Activated CD4-positive, alpha-beta T cell treated with anti-CD3 and anti-CD28 coated beads for 36 hours (primary cell): ENCODE measurements at regions of chr1 and their contacts with region 1.

Region 1: DNA sequence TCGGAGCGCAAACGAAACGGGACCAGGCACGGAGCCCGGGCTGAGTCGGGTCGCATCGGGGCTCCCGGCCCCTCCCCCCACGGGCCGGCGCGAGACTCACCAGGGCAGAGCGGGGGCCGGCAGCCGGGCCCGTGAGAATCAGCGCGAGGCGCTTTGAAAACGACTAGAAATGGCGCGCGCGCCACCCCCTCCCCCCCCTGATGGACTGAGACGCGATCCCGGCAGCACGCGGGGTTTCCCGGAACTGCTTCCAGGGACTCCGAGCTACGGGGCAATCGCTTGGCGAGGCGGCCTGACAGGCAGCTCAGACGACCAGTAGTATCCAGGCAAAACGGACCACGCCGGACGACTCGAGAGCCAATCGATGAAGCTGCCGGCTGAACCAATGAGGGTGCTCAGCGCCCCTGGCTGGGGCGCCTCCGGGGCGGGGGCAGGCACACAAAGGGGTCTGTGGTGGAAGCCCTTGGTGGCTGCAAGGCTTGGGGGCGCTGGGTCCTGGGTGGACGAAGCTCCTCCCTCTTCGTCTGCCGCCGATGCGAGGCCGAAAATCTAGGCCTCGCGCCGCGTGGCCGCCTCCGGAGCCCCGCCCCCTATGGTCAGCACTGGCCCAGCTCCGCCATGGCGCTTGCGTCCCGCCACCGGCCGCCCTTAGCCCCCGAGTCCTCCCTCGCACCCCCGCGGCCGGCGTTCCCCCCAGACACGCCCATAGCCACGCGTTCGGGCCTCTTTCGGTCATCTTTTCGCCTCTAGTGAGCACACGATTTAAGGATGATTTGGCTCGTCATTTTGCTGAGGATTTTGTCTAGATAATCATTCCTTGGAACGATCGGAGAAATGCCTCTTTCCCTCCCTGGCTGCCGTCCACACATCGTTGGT is at the start of gene HNRNPR:
- DNase-seq: peak; percentile 100
- ATAC-seq: peak; percentile 97
- H3K4me3 Mint-ChIP-seq: peak within 1 kb of the TSS; percentile 85
- H3K27ac Mint-ChIP-seq: peak within 1 kb of the TSS; percentile 96
- H3K4me1 Mint-ChIP-seq: peaks cover 35% of the 10 kb centered on the region
- H3K27me3 Mint-ChIP-seq: no peaks in the 10 kb centered on the region
- total RNA-seq, gene HNRNPR: 190 to 210 TPM

Region 2: DNA sequence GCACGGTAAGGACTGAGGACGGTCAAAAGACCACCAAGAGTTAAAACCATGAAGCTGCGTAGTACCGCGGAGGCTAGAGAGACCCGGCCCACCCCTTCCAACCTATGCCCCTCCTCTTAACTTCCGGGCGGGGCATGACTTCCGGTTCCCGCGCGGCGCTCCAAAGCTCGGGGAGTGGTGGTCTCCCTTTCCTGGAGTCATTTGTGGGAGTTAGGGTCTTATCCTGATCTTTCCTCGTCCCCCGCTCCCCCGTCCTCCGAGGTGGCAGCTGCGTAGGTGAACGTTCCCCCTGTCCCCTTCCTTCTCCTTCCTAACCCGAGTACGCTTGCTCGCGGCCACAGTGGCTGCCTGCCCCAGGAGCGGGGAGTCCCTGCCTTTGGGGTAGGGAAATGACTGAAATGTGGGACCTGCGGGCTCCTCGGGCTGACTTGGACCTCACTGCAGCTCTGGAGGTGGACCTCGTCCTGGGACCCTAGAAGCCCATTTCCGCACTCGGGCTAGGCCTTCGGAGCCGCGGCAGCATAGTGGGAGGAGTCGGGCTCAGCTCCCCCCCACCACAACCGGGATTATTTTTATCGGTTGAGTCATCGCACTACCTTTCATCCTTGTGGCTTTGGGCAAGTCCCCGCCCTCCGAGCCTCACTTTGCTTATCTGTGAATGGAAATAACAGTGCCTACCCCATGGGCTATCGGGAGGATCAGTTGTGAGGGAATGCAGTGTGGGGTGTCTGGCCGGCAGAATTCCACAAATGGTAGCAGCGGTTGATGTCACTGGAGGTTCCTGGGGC is 1318.8 kb before region 1 on chr1:
- CTCF ChIA-PET with region 1: no interaction called
- POLR2A ChIA-PET with region 1: no interaction called
- intact Hi-C with region 1: loop called in 1 of 2 experiments (anchors 1 kb)
- DNase-seq: peak; percentile 94
- ATAC-seq: peak; percentile 74
- H3K4me3 Mint-ChIP-seq: peak overlapping the region; percentile 82
- H3K27ac Mint-ChIP-seq: peak overlapping the region; percentile 99
- H3K4me1 Mint-ChIP-seq: peaks cover 59% of the 10 kb centered on the region
- H3K27me3 Mint-ChIP-seq: no peaks in the 10 kb centered on the region

Region 3: GRCh38 chr1:23019094-23019862 is 325.1 kb before region 1 on chr1 and contains the start of gene KDM1A:
- CTCF ChIA-PET with region 1: no interaction called
- POLR2A ChIA-PET with region 1: no interaction called
- intact Hi-C with region 1: loop called in 1 of 2 experiments (anchors 1 kb)
- DNase-seq: peak; percentile 96
- ATAC-seq: peak; percentile 97
- H3K4me3 Mint-ChIP-seq: peak within 1 kb of the TSS; percentile 98
- H3K27ac Mint-ChIP-seq: peak within 1 kb of the TSS; percentile 90
- H3K4me1 Mint-ChIP-seq: peaks cover 43% of the 10 kb centered on the region
- H3K27me3 Mint-ChIP-seq: no peaks in the 10 kb centered on the region
- total RNA-seq, gene KDM1A: 66.5 to 73.2 TPM

Region 4: DNA sequence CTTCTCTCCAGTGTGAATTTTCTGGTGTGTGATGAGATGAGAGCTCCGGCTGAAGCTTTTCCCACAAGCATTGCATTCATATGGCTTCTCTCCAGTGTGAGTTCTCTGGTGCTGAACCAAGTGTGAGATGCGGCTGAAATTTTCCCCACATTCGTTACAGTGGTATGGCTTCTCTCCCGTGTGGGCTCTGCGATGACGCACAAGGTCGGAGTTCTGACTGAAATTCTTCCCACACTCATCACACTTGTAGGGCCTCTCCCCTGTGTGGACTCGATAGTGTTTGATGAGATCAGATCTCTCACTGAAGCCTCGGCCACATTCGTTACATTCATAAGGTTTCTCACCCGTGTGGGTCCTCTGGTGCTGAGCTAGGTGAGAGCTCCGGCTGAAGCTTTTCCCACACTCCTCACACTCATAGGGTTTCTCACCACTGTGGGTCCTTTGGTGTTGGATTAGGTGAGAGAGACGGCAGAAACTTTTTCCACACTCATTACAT is 17.9 kb after region 1 on chr1:
- CTCF ChIA-PET with region 1: interaction called, 4 read pairs
- POLR2A ChIA-PET with region 1: interaction called, 47 read pairs
- intact Hi-C with region 1: no loop called
- DNase-seq: peak; percentile 17
- ATAC-seq: no peak
- H3K4me3 Mint-ChIP-seq: no peak overlapping the region
- H3K27ac Mint-ChIP-seq: no peak overlapping the region
- H3K4me1 Mint-ChIP-seq: peaks cover 12% of the 10 kb centered on the region
- H3K27me3 Mint-ChIP-seq: no peaks in the 10 kb centered on the region

Region 5: GRCh38 chr1:23470282-23471071 is 126.1 kb after region 1 on chr1:
- CTCF ChIA-PET with region 1: no interaction called
- POLR2A ChIA-PET with region 1: no interaction called
- intact Hi-C with region 1: no loop called
- DNase-seq: no peak
- ATAC-seq: no peak
- H3K4me3 Mint-ChIP-seq: no peak overlapping the region
- H3K27ac Mint-ChIP-seq: no peak overlapping the region
- H3K4me1 Mint-ChIP-seq: no peaks in the 10 kb centered on the region
- H3K27me3 Mint-ChIP-seq: no peaks in the 10 kb centered on the region

Region 6: DNA sequence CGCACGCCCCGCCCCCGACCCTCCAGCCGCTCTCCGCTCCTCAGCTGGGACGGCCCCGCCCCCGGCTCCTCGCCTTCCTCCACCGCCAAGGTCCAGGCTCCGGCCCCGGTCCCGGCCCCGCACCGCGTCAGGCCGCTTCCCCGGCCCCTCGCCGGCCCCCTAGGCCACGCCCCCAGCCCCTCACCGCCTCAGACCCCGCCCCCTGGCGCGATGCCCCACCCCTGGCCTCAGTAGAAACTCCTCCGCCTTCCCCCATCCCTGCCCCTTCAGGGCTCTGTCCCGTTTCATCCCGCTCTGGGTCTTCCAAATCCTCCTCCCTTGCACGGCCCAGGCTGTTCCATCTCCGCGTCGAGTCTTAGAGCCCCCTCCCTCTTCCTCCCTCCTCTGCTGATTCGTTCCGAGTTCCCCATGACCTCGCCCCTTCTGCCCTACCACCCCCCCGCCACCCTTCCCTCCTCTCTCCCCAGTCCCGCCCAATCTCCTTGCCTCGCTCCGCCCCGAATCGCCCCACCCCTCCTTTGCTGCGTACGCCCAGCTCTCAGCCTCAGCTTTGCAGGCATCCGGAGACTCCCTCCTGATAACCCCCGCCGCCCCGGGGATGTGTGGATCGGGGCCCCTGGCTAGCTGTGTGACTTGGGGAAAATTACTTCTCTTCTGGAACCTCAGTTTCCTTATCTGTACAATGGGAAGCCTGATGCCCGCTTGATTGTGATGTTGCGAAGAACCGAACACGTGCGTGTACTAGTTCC is 140.1 kb after region 1 on chr1:
- CTCF ChIA-PET with region 1: no interaction called
- POLR2A ChIA-PET with region 1: no interaction called
- intact Hi-C with region 1: loop called in 1 of 2 experiments (anchors 1 kb)
- DNase-seq: peak; percentile 95
- ATAC-seq: peak; percentile 94
- H3K4me3 Mint-ChIP-seq: peak overlapping the region; percentile 79
- H3K27ac Mint-ChIP-seq: peak overlapping the region; percentile 33
- H3K4me1 Mint-ChIP-seq: peaks cover 20% of the 10 kb centered on the region
- H3K27me3 Mint-ChIP-seq: peaks cover 18% of the 10 kb centered on the region

Region 7: GRCh38 chr1:23577056-23578004 is 233.0 kb after region 1 on chr1:
- CTCF ChIA-PET with region 1: no interaction called
- POLR2A ChIA-PET with region 1: no interaction called
- intact Hi-C with region 1: no loop called
- DNase-seq: peak; percentile 73
- ATAC-seq: peak; percentile 98
- H3K4me3 Mint-ChIP-seq: peak overlapping the region; percentile 8
- H3K27ac Mint-ChIP-seq: peak overlapping the region; percentile 79
- H3K4me1 Mint-ChIP-seq: peaks cover 47% of the 10 kb centered on the region
- H3K27me3 Mint-ChIP-seq: no peaks in the 10 kb centered on the region

Region 8: GRCh38 chr1:23619299-23620188 is 275.2 kb after region 1 on chr1:
- CTCF ChIA-PET with region 1: no interaction called
- POLR2A ChIA-PET with region 1: interaction called, 3 read pairs
- intact Hi-C with region 1: loop called in 1 of 2 experiments (anchors 5 kb)
- DNase-seq: peak; percentile 90
- ATAC-seq: peak; percentile 68
- H3K4me3 Mint-ChIP-seq: peak overlapping the region; percentile 60
- H3K27ac Mint-ChIP-seq: peak overlapping the region; percentile 79
- H3K4me1 Mint-ChIP-seq: peaks cover 89% of the 10 kb centered on the region
- H3K27me3 Mint-ChIP-seq: no peaks in the 10 kb centered on the region

Region 9: GRCh38 chr1:23800400-23801337 is 456.3 kb after region 1 on chr1 and contains the start of gene GALE:
- CTCF ChIA-PET with region 1: no interaction called
- POLR2A ChIA-PET with region 1: no interaction called
- intact Hi-C with region 1: loop called in 1 of 2 experiments (anchors 1 kb)
- DNase-seq: peak; percentile 99
- ATAC-seq: peak; percentile 84
- H3K4me3 Mint-ChIP-seq: peak within 1 kb of the TSS; percentile 86
- H3K27ac Mint-ChIP-seq: peak within 1 kb of the TSS; percentile 84
- H3K4me1 Mint-ChIP-seq: peaks cover 13% of the 10 kb centered on the region
- H3K27me3 Mint-ChIP-seq: no peaks in the 10 kb centered on the region
- total RNA-seq, gene GALE: 27.4 to 35.6 TPM